HCT116 (cell line): ENCODE measurements at regions of chr3 and their contacts with region 1.

Region 1: DNA sequence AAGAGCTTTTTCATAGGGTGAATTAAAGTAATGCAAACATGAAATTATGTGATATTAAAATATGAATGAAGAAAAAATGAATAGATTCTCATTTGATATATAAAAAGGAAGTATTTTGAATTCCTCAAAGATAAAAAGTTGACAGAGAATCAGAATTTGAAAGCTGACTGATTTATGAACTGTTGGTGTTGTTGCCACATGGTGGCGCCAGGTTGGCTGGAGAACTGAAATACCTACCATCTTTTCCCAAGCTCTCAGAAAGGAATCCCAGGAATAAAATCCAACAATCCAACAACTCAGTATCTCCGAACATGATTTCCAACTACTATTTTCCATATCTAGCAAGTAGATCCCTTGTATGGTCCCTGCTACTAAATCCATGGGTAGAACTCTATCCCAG is 3.1 kb downstream of the MYRIP start:
- DNase-seq: no peak
- ATAC-seq: no peak
- H3K4me3 ChIP-seq: no peak overlapping the region
- H3K27ac ChIP-seq: no peak overlapping the region
- H3K4me1 ChIP-seq: peaks cover 7 to 8% of the 10 kb centered on the region in 2 experiments; a peak in 3 of 4 replicates
- H3K27me3 ChIP-seq: peaks cover 28% of the 10 kb centered on the region; the same call in 1 of the 2 replicates
- CTCF ChIP-seq: peak; percentile 20 to 64 (median 57); a peak in 5 of 6 replicates
- POLR2A ChIP-seq: no peak
- RAD21 ChIP-seq: peak; percentile 40; the same call in 1 of the 2 replicates

Region 2: GRCh38 chr3:39541917-39542329 is 270.6 kb before region 1 on chr3:
- CTCF ChIA-PET with region 1: interaction called, 3 read pairs
- POLR2A ChIA-PET with region 1: no interaction called
- RAD21 ChIA-PET with region 1: no interaction called
- intact Hi-C with region 1: loop called (anchors 5 kb)
- DNase-seq: peak; percentile 13
- ATAC-seq: peak; percentile 66
- H3K4me3 ChIP-seq: no peak overlapping the region
- H3K27ac ChIP-seq: no peak overlapping the region
- H3K4me1 ChIP-seq: no peaks in the 10 kb centered on the region
- H3K27me3 ChIP-seq: no peaks in the 10 kb centered on the region
- CTCF ChIP-seq: peak; percentile 55 to 71 (median 62); a peak in 4 of 6 replicates
- POLR2A ChIP-seq: no peak
- RAD21 ChIP-seq: peak; percentile 78

Region 3: DNA sequence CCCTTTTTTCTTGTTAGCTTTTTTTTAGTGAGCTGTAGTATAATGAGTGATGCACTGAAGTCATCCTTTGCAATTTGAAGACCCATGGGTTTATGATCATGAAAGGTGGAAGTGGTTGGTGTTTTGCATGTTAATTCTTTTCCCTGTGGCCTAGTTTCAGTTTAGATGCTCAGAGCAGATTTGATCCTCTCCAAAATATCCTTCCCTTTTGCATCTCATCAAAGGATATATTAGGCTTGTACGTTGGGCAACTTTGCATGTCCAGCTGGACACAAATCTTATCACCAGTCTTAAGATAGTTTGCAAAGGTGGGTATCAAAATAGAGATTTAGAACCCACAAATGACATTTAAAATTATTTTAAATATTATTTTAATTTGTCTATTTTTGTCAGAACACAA is 69.6 kb after region 1 on chr3:
- CTCF ChIA-PET with region 1: no interaction called
- POLR2A ChIA-PET with region 1: no interaction called
- RAD21 ChIA-PET with region 1: no interaction called
- intact Hi-C with region 1: no loop called
- DNase-seq: no peak
- ATAC-seq: no peak
- H3K4me3 ChIP-seq: no peak overlapping the region
- H3K27ac ChIP-seq: no peak overlapping the region
- H3K4me1 ChIP-seq: no peaks in the 10 kb centered on the region
- H3K27me3 ChIP-seq: no peaks in the 10 kb centered on the region
- CTCF ChIP-seq: no peak
- POLR2A ChIP-seq: no peak
- RAD21 ChIP-seq: no peak